Natural killer cell (primary cell): ENCODE measurements at regions of chr6 and their contacts with region 1.

Region 1: GRCh38 chr6:52389626-52390360 is 27.8 kb downstream of the PAQR8 start:
- DNase-seq: peak in 1 of 2 donors; percentile 81
- ATAC-seq: peak; percentile 56 to 69 (median 59)
- H3K4me3 ChIP-seq: no peak overlapping the region
- H3K4me3 Mint-ChIP-seq: peak overlapping the region; percentile 91
- H3K27ac ChIP-seq: peak overlapping the region; percentile 82
- H3K27ac Mint-ChIP-seq: peak overlapping the region; percentile 96 to 98
- H3K4me1 ChIP-seq: peaks cover 25% of the 10 kb centered on the region
- H3K4me1 Mint-ChIP-seq: peaks cover 42 to 52% of the 10 kb centered on the region in 2 donors
- H3K27me3 ChIP-seq: no peaks in the 10 kb centered on the region
- H3K27me3 Mint-ChIP-seq: no peaks in the 10 kb centered on the region
- CTCF ChIP-seq: peak; percentile 35

Region 2: GRCh38 chr6:52304983-52305390 is 84.8 kb before region 1 on chr6:
- intact Hi-C with region 1: loop called (anchors 5 kb)
- DNase-seq: peak in 1 of 2 donors; percentile 50
- ATAC-seq: peak; percentile 49 to 60 (median 55)
- H3K4me3 ChIP-seq: no peak overlapping the region
- H3K4me3 Mint-ChIP-seq: peak overlapping the region; percentile 74
- H3K27ac ChIP-seq: peak overlapping the region; percentile 80
- H3K27ac Mint-ChIP-seq: peak overlapping the region; percentile 77 to 88
- H3K4me1 ChIP-seq: peaks cover 45% of the 10 kb centered on the region
- H3K4me1 Mint-ChIP-seq: peaks cover 46 to 54% of the 10 kb centered on the region in 2 donors
- H3K27me3 ChIP-seq: no peaks in the 10 kb centered on the region
- H3K27me3 Mint-ChIP-seq: no peaks in the 10 kb centered on the region
- CTCF ChIP-seq: no peak

Region 3: DNA sequence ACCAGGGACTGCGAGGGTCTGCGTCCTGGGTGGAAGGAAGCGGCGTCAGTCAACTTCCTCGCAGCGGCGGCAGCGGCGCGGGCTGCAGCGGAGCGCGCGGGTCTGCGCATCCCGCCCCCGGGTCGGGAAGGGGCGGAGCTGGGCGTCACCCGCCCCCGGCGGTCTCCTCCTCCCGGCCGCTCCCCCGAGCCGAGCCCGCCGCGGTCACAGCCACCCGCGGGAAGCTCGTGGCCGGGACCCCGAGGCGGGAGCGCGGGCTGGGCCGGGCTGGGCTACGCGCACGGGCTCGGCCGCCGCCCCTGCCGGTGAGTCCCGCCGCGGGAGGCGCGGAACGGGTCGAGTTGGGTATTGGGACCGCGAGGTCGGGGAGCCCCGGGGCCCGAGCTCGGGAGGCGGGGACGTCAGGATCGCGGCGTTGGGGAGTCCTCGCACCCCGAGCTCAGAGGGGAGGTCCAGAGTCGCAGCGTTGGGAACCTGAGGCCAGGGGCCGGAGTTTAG is 27.8 kb before region 1 on chr6 and contains the start of gene PAQR8:
- intact Hi-C with region 1: loop called (anchors 2 kb)
- DNase-seq: peak; percentile 75 to 92
- ATAC-seq: peak; percentile 83 to 93 (median 88)
- H3K4me3 ChIP-seq: peak within 1 kb of the TSS; percentile 98
- H3K4me3 Mint-ChIP-seq: peak within 1 kb of the TSS; percentile 96
- H3K27ac ChIP-seq: peak within 1 kb of the TSS; percentile 94
- H3K27ac Mint-ChIP-seq: peak within 1 kb of the TSS; percentile 92
- H3K4me1 ChIP-seq: peaks cover 15% of the 10 kb centered on the region
- H3K4me1 Mint-ChIP-seq: peaks cover 26 to 31% of the 10 kb centered on the region in 2 donors
- H3K27me3 ChIP-seq: no peaks in the 10 kb centered on the region
- H3K27me3 Mint-ChIP-seq: no peaks in the 10 kb centered on the region
- CTCF ChIP-seq: no peak
- total RNA-seq, gene PAQR8: 2.4 to 5.0 (median 4.6) TPM

Region 4: GRCh38 chr6:52964318-52964717 is 574.5 kb after region 1 on chr6:
- intact Hi-C with region 1: no loop called
- DNase-seq: no peak
- ATAC-seq: no peak
- H3K4me3 ChIP-seq: no peak overlapping the region
- H3K4me3 Mint-ChIP-seq: no peak overlapping the region
- H3K27ac ChIP-seq: no peak overlapping the region
- H3K27ac Mint-ChIP-seq: no peak overlapping the region
- H3K4me1 ChIP-seq: no peaks in the 10 kb centered on the region
- H3K4me1 Mint-ChIP-seq: no peaks in the 10 kb centered on the region
- H3K27me3 ChIP-seq: no peaks in the 10 kb centered on the region
- H3K27me3 Mint-ChIP-seq: peaks cover 0 to 11% of the 10 kb centered on the region in 2 donors
- CTCF ChIP-seq: no peak